GM12878 (cell line): ENCODE measurements at regions of chr6 and their contacts with region 1.

Region 1: DNA sequence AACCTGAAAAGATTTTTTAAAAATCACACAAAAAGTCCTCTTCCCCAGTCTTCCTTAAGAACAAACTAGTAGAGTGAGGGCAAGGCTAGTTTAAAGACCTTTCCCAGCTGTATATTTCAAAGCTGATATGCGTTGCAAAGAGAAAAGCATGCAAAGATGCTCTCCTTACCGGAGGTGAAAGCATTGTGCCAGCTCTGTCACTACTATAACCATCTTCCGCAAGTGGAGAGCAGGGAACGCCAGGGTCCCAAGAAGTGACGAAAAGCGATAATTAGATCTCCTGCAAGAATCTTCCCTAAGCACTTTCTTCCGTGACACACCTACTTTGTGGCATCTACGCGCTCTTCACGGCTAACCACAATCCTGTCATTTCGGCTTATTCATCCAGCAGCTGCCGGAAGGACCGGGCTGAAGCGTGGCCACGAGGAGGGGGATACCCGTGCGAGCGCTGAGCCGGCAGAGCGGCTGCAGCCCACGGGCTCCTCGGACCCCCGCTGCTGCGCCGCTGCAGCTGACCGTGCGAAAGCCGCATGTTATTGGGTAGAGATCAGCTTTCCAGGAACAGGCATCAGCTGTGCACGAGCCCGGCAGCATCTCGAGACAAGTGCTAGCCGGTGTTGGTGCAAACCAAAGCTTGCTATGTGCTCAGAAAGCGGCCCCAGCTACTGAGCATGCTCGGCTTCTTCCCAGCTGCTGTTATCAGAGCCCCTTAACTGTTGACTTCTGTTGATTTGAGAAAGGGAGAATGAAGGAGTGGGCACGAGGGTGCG is 57.2 kb upstream of the ARHGAP18 start:
- DNase-seq: no peak
- ATAC-seq: peak; percentile 90
- H3K4me3 ChIP-seq: peak overlapping the region; percentile 59
- H3K27ac ChIP-seq: no peak overlapping the region
- H3K4me1 ChIP-seq: no peaks in the 10 kb centered on the region
- H3K27me3 ChIP-seq: no peaks in the 10 kb centered on the region
- CTCF ChIP-seq: no peak
- EP300 ChIP-seq: no peak; a peak in 1 of 4 replicates
- POLR2A ChIP-seq: no peak
- RAD21 ChIP-seq: no peak

Region 2: DNA sequence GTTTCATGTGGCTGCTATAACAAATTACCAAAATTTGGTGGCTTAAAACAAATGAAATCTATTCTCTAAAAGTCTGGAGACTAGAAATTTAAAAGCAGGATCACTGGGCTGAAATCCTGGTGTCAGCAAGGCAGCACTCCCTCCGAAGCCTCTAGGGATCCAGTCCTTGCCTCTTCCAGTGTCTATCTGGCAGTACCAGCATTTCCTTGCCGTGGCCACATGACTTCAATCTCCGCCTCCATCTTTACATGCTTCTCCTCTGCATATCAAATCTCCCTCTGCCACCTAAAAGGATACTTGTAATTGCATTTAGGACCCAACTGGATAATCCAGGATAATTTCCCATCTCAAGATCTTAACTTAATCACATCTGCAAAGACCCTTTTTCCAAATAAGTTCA is 87.4 kb before region 1 on chr6:
- CTCF ChIA-PET with region 1: no interaction called
- POLR2A ChIA-PET with region 1: no interaction called
- RAD21 ChIA-PET with region 1: no interaction called
- SMC1A ChIA-PET with region 1: no interaction called
- in situ Hi-C with region 1: no loop called
- intact Hi-C with region 1: no loop called
- DNase-seq: no peak
- ATAC-seq: no peak
- H3K4me3 ChIP-seq: no peak overlapping the region
- H3K27ac ChIP-seq: no peak overlapping the region
- H3K4me1 ChIP-seq: peaks cover 27% of the 10 kb centered on the region
- H3K27me3 ChIP-seq: no peaks in the 10 kb centered on the region
- CTCF ChIP-seq: no peak
- EP300 ChIP-seq: no peak
- POLR2A ChIP-seq: no peak
- RAD21 ChIP-seq: no peak

Region 3: GRCh38 chr6:129785047-129785755 is 18.1 kb after region 1 on chr6:
- CTCF ChIA-PET with region 1: interaction called, 10 read pairs
- POLR2A ChIA-PET with region 1: no interaction called
- RAD21 ChIA-PET with region 1: no interaction called
- SMC1A ChIA-PET with region 1: interaction called, 3 read pairs
- in situ Hi-C with region 1: no loop called
- intact Hi-C with region 1: no loop called
- DNase-seq: no peak
- ATAC-seq: no peak
- H3K4me3 ChIP-seq: no peak overlapping the region
- H3K27ac ChIP-seq: no peak overlapping the region
- H3K4me1 ChIP-seq: no peaks in the 10 kb centered on the region
- H3K27me3 ChIP-seq: peaks cover 0 to 4% of the 10 kb centered on the region in 2 experiments; a peak in 2 of 4 replicates
- CTCF ChIP-seq: no peak
- EP300 ChIP-seq: no peak
- POLR2A ChIP-seq: no peak
- RAD21 ChIP-seq: no peak

Region 4: DNA sequence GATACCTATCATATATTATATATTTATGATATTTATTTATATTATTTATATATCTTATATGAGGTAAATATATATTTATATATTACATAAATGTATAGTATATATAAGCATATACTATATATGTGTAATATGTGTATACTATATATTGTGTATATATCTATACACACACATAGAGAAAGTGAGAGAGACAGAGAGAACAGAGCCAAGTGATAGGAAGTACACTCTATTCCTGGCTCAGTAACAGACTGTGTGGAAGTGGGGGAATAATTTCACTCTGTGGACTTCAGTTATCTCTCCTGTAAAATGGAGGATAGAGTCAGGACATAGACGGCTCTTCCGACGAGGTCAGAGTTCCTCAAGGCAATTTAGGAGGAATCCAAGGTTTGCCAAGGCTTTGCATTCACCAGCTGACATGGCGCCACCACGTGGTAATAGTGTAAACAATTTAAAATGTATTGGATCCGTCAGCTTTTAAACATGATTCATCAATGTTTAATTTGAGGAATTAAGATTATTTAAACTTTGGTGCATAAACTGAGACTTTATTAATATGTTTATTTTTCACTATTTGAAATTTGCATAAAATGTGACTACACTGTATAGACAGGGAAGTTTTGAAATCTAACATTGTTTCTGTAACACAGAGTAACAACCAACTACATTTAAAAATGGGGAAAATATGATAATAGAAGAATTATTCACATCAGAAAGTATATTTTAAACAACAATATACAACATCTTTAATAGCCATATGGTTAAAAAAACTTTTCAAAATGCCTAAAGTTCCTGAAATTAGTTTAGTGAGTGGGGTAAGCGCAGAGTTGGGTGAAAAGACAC is 169.4 kb after region 1 on chr6:
- CTCF ChIA-PET with region 1: no interaction called
- POLR2A ChIA-PET with region 1: no interaction called
- RAD21 ChIA-PET with region 1: interaction called, 4 read pairs
- SMC1A ChIA-PET with region 1: interaction called, 9 read pairs
- in situ Hi-C with region 1: no loop called
- intact Hi-C with region 1: loop called (anchors 5 kb)
- DNase-seq: peak; percentile 21
- ATAC-seq: peak; percentile 84
- H3K4me3 ChIP-seq: no peak overlapping the region
- H3K27ac ChIP-seq: no peak overlapping the region
- H3K4me1 ChIP-seq: no peaks in the 10 kb centered on the region
- H3K27me3 ChIP-seq: no peaks in the 10 kb centered on the region; a peak in 1 of 4 replicates
- CTCF ChIP-seq: peak; percentile 64 to 77 (median 66)
- EP300 ChIP-seq: no peak
- POLR2A ChIP-seq: no peak
- RAD21 ChIP-seq: peak; percentile 81

Region 5: GRCh38 chr6:129966125-129966524 is 199.0 kb after region 1 on chr6:
- CTCF ChIA-PET with region 1: no interaction called
- POLR2A ChIA-PET with region 1: no interaction called
- RAD21 ChIA-PET with region 1: no interaction called
- SMC1A ChIA-PET with region 1: no interaction called
- in situ Hi-C with region 1: no loop called
- intact Hi-C with region 1: no loop called
- DNase-seq: no peak
- ATAC-seq: no peak
- H3K4me3 ChIP-seq: no peak overlapping the region
- H3K27ac ChIP-seq: no peak overlapping the region
- H3K4me1 ChIP-seq: no peaks in the 10 kb centered on the region
- H3K27me3 ChIP-seq: peaks cover 0 to 3% of the 10 kb centered on the region in 2 experiments; a peak in 2 of 4 replicates
- CTCF ChIP-seq: no peak
- EP300 ChIP-seq: no peak
- POLR2A ChIP-seq: no peak
- RAD21 ChIP-seq: no peak